KBM-7 (cell line): ENCODE measurements at regions of chr14 and their contacts with region 1.

Region 1: DNA sequence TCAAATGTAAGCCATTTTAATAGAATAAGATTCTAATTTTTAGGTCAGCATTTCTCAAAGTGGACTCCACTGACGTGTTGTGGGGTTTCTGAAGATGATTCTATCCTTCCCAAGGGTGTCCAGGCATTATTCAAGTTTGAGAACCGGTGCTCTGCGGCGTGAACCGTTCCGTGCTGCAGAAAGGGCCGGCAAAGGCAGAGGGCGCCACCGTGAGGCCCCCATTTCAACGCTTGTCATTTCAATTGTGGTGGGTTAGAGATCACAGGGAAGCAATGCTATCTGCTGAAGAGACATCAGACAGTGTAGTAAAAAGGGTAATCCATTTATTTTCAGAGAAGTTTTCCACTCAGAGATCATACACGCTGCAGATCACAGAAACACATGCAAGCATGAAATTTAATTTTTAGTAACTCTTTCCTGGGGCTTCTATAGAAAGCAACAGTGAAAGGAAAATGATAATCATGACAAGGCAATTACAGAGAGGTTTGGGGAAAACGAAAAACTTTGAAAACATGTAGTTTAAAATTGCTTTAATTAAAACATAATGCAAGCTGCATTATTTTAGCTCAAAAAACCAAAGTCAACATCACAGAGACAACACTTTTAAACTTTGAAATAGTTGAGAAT is 201.7 kb downstream of the EXOC5 start:
- DNase-seq: peak; percentile 57

Region 2: GRCh38 chr14:56549721-56550120 is 517.3 kb before region 1 on chr14:
- in situ Hi-C with region 1: loop called (anchors 25 kb)
- DNase-seq: no peak

Region 3: DNA sequence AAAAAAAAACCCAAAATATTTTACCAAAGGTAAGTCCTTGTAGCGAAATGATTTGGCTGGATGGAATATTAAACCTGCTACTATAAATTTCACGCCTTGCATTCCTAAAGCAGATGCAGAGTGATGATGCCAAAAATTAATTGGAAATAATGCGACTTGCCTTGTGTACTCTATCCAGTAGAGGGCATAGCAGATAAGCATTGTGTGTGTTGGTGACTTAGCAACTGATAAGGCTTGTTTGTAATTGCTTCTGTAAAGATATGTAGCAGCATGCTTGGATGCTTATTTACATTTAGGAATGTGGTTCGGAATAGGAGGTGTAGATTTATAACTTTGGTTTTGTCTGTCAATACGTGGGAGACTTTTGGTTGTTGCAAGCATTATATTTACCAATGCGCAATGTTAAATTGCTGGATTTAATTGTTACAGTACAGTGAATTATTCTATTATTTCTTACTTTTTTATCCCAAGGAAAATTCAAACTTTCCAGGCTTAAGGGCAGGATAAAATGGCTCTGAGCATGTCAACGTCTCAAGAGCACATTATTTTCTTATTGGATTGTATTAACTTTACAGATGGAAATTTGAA is 406.9 kb before region 1 on chr14:
- in situ Hi-C with region 1: loop called (anchors 25 kb)
- DNase-seq: peak; percentile 49